OCI-LY7 (cell line): ENCODE measurements at regions of chr13 and their contacts with region 1.

Region 1: GRCh38 chr13:25742220-25742619 is 309.6 kb downstream of the SHISA2 start:
- DNase-seq: no peak
- H3K4me3 ChIP-seq: no peak overlapping the region
- H3K27ac ChIP-seq: no peak overlapping the region
- H3K4me1 ChIP-seq: peaks cover 16% of the 10 kb centered on the region
- CTCF ChIP-seq: no peak

Region 2: GRCh38 chr13:25501231-25501630 is 241.0 kb before region 1 on chr13:
- CTCF ChIA-PET with region 1: no interaction called
- POLR2A ChIA-PET with region 1: no interaction called
- intact Hi-C with region 1: no loop called
- DNase-seq: no peak
- H3K4me3 ChIP-seq: no peak overlapping the region
- H3K27ac ChIP-seq: no peak overlapping the region
- H3K4me1 ChIP-seq: no peaks in the 10 kb centered on the region
- CTCF ChIP-seq: no peak

Region 3: GRCh38 chr13:25584087-25584486 is 158.1 kb before region 1 on chr13:
- CTCF ChIA-PET with region 1: no interaction called
- POLR2A ChIA-PET with region 1: interaction called, 10 read pairs
- intact Hi-C with region 1: no loop called
- DNase-seq: no peak
- H3K4me3 ChIP-seq: no peak overlapping the region
- H3K27ac ChIP-seq: no peak overlapping the region
- H3K4me1 ChIP-seq: no peaks in the 10 kb centered on the region
- CTCF ChIP-seq: no peak